Activated B cell treated with CpG ODN at 0.5 μM for 24 hours (primary cell): ENCODE measurements at regions of chr4 and their contacts with region 1.

Region 1: GRCh38 chr4:153733751-153734448 is 25.9 kb downstream of the RNF175 start:
- DNase-seq: no peak
- ATAC-seq: no peak
- H3K4me3 Mint-ChIP-seq: no peak overlapping the region
- H3K27ac Mint-ChIP-seq: no peak overlapping the region
- H3K4me1 Mint-ChIP-seq: peaks cover 16% of the 10 kb centered on the region
- H3K27me3 Mint-ChIP-seq: no peaks in the 10 kb centered on the region
- CTCF ChIP-seq: no peak

Region 2: DNA sequence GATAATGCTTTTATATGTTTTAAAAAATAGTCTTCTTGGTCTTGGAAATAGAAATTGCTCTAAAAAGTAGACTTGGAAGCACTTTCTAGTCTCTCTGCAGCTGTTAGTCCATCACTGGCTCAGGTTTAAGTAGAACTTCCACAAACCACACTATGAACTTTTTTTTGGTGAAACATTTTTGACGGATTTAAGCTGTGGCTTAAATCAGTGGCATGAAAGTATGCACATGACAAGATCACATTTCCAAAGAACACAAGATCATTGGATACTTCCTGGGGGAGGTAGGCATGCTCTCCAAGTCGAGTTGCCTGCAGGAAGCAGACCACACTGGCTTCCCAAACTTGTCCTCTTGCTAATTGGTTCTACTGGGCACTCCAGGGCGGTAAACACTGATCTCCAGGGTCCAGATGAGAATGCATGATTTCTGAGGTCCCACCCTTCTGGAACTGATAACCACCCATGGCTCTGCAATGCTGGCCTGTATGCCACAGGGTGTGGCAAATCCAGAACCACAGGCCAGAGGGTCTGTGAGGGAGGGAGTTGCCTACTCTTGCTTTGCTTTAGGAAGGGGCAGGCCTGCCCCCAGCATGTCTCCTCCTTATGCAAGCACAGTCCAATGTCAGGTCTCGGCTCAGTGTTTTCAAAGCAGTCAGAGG is 386.9 kb after region 1 on chr4:
- CTCF ChIA-PET with region 1: no interaction called
- POLR2A ChIA-PET with region 1: interaction called, 13 read pairs
- intact Hi-C with region 1: no loop called
- DNase-seq: no peak
- ATAC-seq: no peak
- H3K4me3 Mint-ChIP-seq: no peak overlapping the region
- H3K27ac Mint-ChIP-seq: no peak overlapping the region
- H3K4me1 Mint-ChIP-seq: no peaks in the 10 kb centered on the region
- H3K27me3 Mint-ChIP-seq: no peaks in the 10 kb centered on the region
- CTCF ChIP-seq: no peak